H1 (cell line): ENCODE measurements at regions of chr7 and their contacts with region 1.

Region 1: DNA sequence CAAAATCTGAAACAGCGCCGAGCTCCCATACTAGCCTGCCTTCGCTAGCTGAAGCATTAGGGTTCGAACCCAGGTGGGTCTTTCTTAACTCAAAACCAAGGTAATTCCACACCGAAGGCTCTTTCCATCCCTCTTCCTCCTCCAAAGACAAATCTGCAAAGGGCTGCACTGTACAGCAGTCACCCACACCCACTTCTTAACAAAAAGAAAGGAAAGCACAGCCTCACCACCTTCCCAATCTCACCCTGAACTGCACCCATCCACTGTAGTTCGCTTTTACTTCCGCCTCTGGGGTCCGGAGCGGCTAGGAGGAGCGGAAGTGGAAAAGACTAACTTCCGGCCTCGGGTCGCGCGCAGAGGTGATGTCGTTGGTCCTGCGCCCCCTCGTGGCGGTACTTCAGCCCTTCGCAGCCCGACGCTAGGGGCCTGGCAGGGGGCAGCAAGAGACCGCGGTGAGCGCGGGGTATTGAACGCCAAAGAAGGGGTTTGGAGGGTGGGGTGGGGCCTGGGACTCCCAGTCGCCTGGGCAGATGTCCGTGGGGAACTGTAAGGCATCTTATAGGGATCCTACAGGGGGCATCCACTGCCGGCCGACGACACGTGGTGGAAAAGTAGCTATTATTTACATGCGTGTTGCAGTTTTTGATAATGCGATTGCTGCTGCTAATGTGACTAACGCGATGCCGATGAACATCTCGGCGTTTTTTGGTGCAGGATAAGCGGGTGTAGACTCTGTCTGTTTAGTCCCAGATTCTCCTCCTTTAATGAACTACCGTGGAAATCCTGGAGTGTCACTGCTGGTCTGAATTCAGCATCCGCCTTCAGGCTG is at the start of gene MTERF1:
- DNase-seq: peak; percentile 86 to 95
- H3K4me3 ChIP-seq: peak within 1 kb of the TSS; percentile 76 to 95 (median 90)
- H3K27ac ChIP-seq: no peak within 1 kb of the TSS
- H3K4me1 ChIP-seq: peaks cover 0 to 2% (median 0%) of the 10 kb centered on the region in 4 experiments; a peak in 1 of 7 replicates
- H3K27me3 ChIP-seq: no peaks in the 10 kb centered on the region; a peak in 1 of 7 replicates
- CTCF ChIP-seq: peak; percentile 92 to 99 (median 94)
- EP300 ChIP-seq: 0 out of 3 replicates have a peak, but pooled peaks of 1 of the 2 experiments have one; percentile 51
- POLR2A ChIP-seq: peak; percentile 63 to 91
- RAD21 ChIP-seq: peak; percentile 82 to 91
- total RNA-seq, gene MTERF1: 11.1 and 12.6 TPM in 2 replicates

Region 2: GRCh38 chr7:91945476-91945875 is 64.8 kb after region 1 on chr7:
- CTCF ChIA-PET with region 1: interaction called, 13 read pairs
- POLR2A ChIA-PET with region 1: interaction called, 5 read pairs
- DNase-seq: no peak
- H3K4me3 ChIP-seq: no peak overlapping the region
- H3K27ac ChIP-seq: no peak overlapping the region
- H3K4me1 ChIP-seq: no peaks in the 10 kb centered on the region
- H3K27me3 ChIP-seq: no peaks in the 10 kb centered on the region
- CTCF ChIP-seq: no peak
- EP300 ChIP-seq: no peak
- POLR2A ChIP-seq: no peak
- RAD21 ChIP-seq: no peak